Breast epithelium (tissue), 4 donors: ENCODE measurements at regions of chr10 and their contacts with region 1.

Region 1: GRCh38 chr10:122565728-122566206 is 5.2 kb downstream of the DMBT1 start:
- DNase-seq: peak; percentile 74 to 80
- H3K4me3 ChIP-seq: peak overlapping the region in 2 of 3 donors; percentile 32 to 62
- H3K27ac ChIP-seq: no peak overlapping the region
- H3K4me1 ChIP-seq: no peaks in the 10 kb centered on the region
- H3K27me3 ChIP-seq: no peaks in the 10 kb centered on the region
- CTCF ChIP-seq: peak; percentile 52 to 81 (median 78)
- POLR2A ChIP-seq: no peak

Region 2: DNA sequence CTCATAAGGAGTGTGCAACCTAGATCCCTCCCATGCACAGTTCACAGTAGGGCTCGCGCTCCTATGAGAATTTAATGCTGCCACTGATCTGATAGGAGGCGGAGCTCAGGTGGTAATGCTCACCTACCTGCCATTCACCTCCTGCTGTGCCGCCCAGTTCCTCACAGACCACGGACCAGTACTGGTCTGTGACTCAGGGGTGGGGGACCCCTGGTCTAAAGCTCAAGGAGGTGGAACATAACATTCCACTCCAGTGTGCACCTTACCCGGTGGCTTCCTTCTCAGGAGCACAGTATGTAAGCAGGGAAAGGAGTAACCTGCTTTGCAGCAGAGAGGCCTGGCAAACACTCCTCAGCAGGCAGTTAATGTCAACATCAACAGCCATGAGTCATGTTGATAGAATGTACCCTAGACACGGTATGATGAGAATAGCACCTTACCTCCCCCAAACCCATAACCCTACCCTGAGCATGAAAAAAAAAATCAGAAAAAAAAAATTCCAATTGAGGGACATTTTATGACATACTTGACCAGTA is 1241.0 kb before region 1 on chr10:
- intact Hi-C with region 1: no loop called
- DNase-seq: no peak
- H3K4me3 ChIP-seq: no peak overlapping the region
- H3K27ac ChIP-seq: no peak overlapping the region
- H3K4me1 ChIP-seq: no peaks in the 10 kb centered on the region
- H3K27me3 ChIP-seq: no peaks in the 10 kb centered on the region
- CTCF ChIP-seq: no peak
- POLR2A ChIP-seq: no peak

Region 3: DNA sequence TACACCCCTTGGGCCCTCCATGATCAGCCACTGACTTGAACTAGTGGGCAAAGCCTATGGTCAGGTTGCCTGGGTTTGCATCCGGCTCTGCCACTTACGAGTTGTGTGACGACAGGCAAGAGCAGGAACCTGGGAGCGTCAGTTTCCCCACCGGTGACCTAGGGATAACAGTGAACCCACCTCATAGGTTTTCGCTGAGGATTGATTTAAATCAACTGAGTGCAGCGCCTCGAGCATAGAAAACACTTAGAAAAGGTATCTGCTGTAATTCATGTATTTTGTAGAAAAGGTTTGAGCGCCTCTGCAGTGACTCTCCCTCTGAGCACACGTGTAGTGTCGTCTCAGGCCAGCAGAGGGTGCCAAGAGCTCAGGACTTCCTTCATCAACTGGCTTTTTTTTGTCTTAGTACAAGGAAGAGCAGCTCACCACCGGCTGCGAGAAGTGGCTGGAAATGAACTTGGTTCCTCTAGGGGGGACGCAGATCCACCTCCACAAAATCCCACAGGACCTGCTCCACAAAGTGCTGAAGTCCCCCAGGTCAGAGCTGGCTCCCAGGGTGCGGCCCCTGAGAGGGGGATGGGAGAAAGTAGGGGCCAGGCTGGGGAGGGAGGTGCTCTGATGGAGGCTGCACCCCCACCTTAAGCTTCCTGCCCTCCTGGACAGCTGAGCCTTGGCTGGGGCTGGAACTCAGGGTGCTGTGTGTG is 267.0 kb before region 1 on chr10:
- intact Hi-C with region 1: loop called (anchors 10 kb)
- DNase-seq: peak in 1 of 2 donors; percentile 52
- H3K4me3 ChIP-seq: peak overlapping the region in 1 of 3 donors; percentile 31
- H3K27ac ChIP-seq: no peak overlapping the region
- H3K4me1 ChIP-seq: no peaks in the 10 kb centered on the region
- H3K27me3 ChIP-seq: no peaks in the 10 kb centered on the region
- CTCF ChIP-seq: peak; percentile 78 to 86 (median 85)
- POLR2A ChIP-seq: no peak

Region 4: GRCh38 chr10:122699706-122700436 is 134.1 kb after region 1 on chr10 and contains the start of gene C10orf120:
- intact Hi-C with region 1: loop called (anchors 2 kb)
- DNase-seq: no peak
- H3K4me3 ChIP-seq: no peak within 1 kb of the TSS
- H3K27ac ChIP-seq: no peak within 1 kb of the TSS
- H3K4me1 ChIP-seq: no peaks in the 10 kb centered on the region
- H3K27me3 ChIP-seq: no peaks in the 10 kb centered on the region
- CTCF ChIP-seq: no peak
- POLR2A ChIP-seq: no peak
- total RNA-seq, gene C10orf120: not detected